K562 (cell line): ENCODE measurements at regions of chr7 and their contacts with region 1.

Region 1: DNA sequence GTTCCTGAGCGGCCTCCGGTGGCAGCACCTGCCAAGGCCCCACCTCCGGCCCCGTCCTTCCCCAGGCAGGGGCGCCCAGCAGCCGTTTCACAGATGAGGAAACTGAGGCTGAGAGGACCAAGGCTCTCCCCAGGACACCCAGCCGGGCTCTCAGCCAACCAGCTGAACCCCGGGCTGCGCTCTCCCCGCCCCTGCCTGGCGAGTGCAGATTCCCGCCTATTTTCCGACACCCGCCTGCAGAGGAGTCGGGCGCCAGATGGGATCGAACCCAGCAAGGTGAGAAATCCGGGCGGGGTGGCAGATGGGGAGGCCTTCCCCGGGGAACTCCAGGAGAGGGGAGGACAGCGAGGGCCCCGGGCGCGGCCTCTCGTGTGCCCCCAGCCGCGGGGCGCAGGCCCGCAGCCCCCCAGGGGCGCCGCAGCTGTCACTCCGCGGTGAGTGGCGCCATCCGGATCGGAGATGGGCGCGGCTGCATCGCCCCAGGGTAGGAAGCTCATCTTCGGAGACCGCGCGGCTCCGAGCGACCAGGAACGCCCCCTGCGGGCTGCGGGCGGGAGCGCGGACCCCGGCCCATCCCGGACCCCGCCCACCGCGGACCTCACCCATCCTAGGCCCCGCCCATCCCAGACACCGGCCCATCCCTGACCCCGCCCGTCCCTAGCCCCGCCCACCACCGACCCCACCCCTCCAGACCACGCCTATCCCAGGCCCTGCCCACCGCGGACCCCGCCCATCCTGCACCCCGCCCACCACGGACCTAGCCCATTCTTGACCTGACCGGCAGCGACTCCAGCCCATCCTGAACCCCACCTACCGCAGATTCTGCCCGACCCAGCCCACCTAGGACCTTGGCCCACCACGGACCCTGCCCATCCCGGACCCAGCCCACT is 90.3 kb downstream of the MICALL2 start:
- DNase-seq: peak; percentile 84 to 100 (median 100)
- ATAC-seq: peak; percentile 96
- H3K4me3 ChIP-seq: peak overlapping the region; percentile 25; the same call in 1 of the 2 replicates
- H3K27ac ChIP-seq: no peak overlapping the region
- H3K4me1 ChIP-seq: peaks cover 0 to 28% of the 10 kb centered on the region in 2 experiments; a peak in 3 of 5 replicates
- H3K27me3 ChIP-seq: peaks cover 30 to 81% of the 10 kb centered on the region in 2 experiments; a peak in 4 of 5 replicates
- CTCF ChIP-seq: peak; percentile 46 to 75 (median 49); a peak in 5 of 6 replicates
- EP300 ChIP-seq: no peak
- POLR2A ChIP-seq: no peak
- RAD21 ChIP-seq: peak in 1 of 2 experiments; percentile 42; a peak in 1 of 4 replicates

Region 2: DNA sequence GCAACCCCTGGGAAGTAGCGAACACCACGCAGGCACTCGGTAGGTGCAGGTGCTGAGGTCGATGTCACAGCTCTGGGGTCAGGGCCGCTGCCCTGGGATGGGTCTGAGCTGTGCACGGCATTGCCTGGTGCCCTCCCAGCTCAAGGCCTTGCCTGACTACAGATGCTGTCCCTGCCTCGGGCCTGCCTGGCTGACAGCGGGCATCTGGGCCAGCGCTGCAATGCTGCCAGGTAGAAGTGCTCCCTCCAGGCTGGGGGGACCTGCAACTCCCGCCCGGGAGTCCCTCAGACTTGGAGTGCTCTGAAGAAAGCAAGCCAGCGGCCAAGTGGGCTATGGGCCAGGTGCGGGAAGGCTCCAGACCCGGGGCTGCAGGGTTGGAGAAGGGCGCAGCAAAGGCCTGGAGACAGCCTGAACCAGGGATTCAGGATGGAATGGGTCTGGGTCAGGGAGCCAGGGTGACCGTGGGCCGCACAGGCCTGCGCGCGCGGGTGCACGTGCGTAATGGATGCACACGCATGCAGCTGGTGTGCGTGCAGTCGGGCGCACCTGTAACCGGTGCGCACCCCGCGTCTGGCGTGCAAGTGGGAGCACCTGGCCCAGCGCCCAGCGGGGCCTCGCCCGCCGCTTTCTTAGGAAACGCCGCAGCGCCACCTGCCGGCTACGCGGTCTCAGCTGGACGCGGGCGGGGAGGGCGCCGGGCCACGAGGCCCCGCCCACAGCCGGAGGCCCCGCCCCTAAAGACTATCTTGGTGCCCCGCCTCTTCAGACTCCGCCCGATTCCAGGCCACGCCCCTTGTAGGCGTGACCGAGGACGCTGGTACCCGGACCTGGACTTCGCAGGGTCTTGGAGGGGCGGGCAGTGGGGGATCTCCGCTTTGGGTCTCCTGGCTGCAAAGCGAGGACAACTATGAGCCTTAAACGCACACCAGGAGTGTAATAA is 43.7 kb after region 1 on chr7:
- CTCF ChIA-PET with region 1: no interaction called
- POLR2A ChIA-PET with region 1: no interaction called
- in situ Hi-C with region 1: no loop called
- intact Hi-C with region 1: loop called (anchors 2 kb)
- DNase-seq: peak; percentile 91 to 99 (median 98)
- ATAC-seq: peak; percentile 97
- H3K4me3 ChIP-seq: no peak overlapping the region
- H3K27ac ChIP-seq: no peak overlapping the region
- H3K4me1 ChIP-seq: peaks cover 6 to 28% of the 10 kb centered on the region in 2 experiments
- H3K27me3 ChIP-seq: peaks cover 7 to 36% of the 10 kb centered on the region in 2 experiments; a peak in 3 of 5 replicates
- CTCF ChIP-seq: peak; percentile 84 to 91 (median 90)
- EP300 ChIP-seq: no peak
- POLR2A ChIP-seq: no peak
- RAD21 ChIP-seq: peak; percentile 83 to 89